ENCODE measurements at regions of chr22 and their contacts with region 1.

Region 1: GRCh38 chr22:43385770-43386641 is 25.8 kb upstream of the MPPED1 start:
- DNase-seq: peak; percentile 80
- H3K4me3 Mint-ChIP-seq: no peak overlapping the region
- H3K27ac Mint-ChIP-seq: no peak overlapping the region
- H3K4me1 Mint-ChIP-seq: peaks cover 6% of the 10 kb centered on the region
- H3K27me3 Mint-ChIP-seq: peaks cover 11% of the 10 kb centered on the region

Region 2: DNA sequence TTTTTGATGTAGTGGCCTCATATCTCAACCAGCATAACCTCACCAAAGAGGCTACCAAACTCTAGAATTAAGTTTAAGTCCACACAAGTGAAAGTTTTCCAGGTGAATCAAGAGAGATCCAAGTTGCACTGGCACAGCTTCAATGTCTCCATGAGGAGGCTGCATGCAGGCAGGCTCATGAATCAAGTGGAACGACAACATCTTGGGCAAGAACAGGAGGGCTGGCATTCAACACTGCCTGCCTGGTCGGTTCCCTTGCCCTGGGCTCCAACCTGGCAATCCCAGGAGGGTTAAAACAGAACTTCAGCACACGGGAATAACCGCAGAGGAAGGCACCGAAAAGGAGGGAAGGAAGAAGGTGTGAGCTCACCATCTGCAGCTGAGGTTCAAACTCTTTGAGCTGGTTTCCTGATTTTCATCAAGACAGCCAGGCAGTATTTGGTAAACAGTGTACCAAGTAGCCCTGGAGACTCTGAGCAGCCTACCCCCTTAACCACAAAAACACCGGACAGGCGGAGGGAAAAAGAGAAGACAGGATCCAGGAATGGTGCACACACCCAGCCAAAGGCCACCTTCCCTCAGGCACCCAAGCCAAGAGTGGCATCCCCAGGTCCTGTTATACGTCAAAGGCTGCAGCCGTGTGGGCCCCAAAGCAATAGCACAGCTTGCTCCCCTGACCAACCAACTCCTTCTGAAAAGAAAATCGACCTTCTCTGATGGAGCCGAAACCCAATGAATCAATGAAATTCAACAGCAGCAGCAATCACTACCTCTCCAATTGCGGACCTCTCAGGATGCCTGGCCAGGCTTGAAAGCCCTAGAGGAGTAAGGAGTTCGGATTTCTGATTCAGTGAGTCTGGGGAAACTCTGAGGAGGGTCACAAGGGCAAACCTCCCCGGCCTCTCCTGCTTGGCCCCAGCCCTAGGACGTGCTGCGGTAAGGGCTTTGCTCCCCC is 372.4 kb before region 1 on chr22:
- CTCF ChIA-PET with region 1: no interaction called
- POLR2A ChIA-PET with region 1: no interaction called
- intact Hi-C with region 1: no loop called
- DNase-seq: peak; percentile 38
- H3K4me3 Mint-ChIP-seq: peak overlapping the region; percentile 93
- H3K27ac Mint-ChIP-seq: peak overlapping the region; percentile 34
- H3K4me1 Mint-ChIP-seq: peaks cover 31% of the 10 kb centered on the region
- H3K27me3 Mint-ChIP-seq: no peaks in the 10 kb centered on the region

Region 3: DNA sequence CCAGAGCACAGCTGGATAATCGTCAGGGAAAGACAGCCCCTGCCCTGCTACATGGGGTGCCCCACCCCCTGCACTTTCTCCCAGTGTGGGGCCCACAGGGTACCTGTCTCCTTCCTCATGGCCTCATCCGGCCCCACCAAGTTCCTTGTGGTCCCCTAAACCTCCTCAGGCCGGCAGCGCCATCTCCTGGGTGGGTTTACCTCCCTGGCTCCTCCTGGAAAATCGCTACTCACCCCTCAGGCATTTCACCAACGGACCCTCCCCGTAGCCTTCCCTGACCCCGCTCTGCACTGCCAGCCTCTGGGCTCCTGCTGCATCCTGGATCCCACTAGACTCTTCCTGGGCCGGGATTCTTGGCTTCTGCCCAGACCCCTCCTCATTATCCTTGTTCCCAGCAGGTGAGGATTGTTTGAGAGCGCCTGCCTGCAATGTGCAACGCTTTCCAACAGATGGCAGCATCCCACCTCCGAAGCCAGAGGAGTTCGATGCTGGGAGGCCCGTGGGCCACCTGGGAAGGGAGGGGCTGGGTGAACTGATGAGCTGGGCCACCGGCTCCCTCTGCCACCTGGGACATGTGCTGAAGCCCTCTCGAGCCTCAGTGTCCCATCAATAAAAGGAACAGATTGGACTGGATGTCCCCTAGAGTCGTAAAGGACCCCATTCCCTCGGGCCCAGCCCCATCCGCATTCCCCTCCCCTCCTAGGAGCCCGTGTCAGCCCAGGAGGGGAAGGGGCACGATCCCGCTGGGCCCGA is 154.9 kb before region 1 on chr22:
- CTCF ChIA-PET with region 1: interaction called, 41 read pairs
- POLR2A ChIA-PET with region 1: no interaction called
- intact Hi-C with region 1: loop called (anchors 1 kb)
- DNase-seq: peak; percentile 75
- H3K4me3 Mint-ChIP-seq: no peak overlapping the region
- H3K27ac Mint-ChIP-seq: no peak overlapping the region
- H3K4me1 Mint-ChIP-seq: peaks cover 2% of the 10 kb centered on the region
- H3K27me3 Mint-ChIP-seq: no peaks in the 10 kb centered on the region

Region 4: GRCh38 chr22:43263645-43264514 is 122.1 kb before region 1 on chr22:
- CTCF ChIA-PET with region 1: interaction called, 10 read pairs
- POLR2A ChIA-PET with region 1: no interaction called
- intact Hi-C with region 1: no loop called
- DNase-seq: peak; percentile 93
- H3K4me3 Mint-ChIP-seq: peak overlapping the region; percentile 39
- H3K27ac Mint-ChIP-seq: peak overlapping the region; percentile 65
- H3K4me1 Mint-ChIP-seq: peaks cover 25% of the 10 kb centered on the region
- H3K27me3 Mint-ChIP-seq: no peaks in the 10 kb centered on the region

Region 5: DNA sequence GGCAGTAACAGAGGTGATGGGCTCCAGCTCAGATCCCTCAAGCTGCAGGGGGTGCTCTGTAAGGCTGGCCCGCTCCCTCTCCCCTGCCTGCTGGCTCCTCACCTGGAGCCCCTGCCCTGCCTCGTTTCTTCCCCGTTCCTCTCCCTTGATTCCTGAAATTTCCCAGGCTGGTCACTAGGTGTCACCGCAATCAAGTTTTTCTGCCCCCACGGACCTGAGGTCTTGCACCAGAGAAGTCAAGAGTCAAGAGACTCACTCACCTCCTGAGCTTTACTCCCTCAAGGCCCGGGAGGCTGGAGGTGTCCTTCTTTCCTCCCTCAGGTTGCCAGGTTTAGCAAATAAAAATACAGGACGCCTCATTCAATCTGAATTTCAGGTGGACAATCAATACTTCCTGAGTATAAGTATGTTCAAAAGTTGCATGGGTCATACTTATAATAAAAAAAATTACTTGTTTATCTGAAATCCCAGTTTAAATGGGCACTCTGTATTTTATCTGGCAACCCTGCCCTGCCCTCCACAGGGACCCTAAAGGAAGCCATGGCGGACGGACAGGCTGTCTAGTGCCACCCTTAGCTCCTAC is 112.0 kb before region 1 on chr22:
- CTCF ChIA-PET with region 1: interaction called, 23 read pairs
- POLR2A ChIA-PET with region 1: no interaction called
- intact Hi-C with region 1: loop called (anchors 1 kb)
- DNase-seq: peak; percentile 59
- H3K4me3 Mint-ChIP-seq: no peak overlapping the region
- H3K27ac Mint-ChIP-seq: no peak overlapping the region
- H3K4me1 Mint-ChIP-seq: no peaks in the 10 kb centered on the region
- H3K27me3 Mint-ChIP-seq: peaks cover 3% of the 10 kb centered on the region